IMR-90 (cell line): ENCODE measurements at regions of chr2 and their contacts with region 1.

Region 1: GRCh38 chr2:237726401-237726830 is 72.2 kb upstream of the RBM44 start:
- DNase-seq: peak; percentile 88
- ATAC-seq: peak; percentile 74
- H3K4me3 ChIP-seq: no peak overlapping the region
- H3K27ac ChIP-seq: no peak overlapping the region
- H3K4me1 ChIP-seq: peaks cover 14% of the 10 kb centered on the region
- H3K27me3 ChIP-seq: no peaks in the 10 kb centered on the region
- CTCF ChIP-seq: no peak
- POLR2A ChIP-seq: no peak
- RAD21 ChIP-seq: no peak

Region 2: GRCh38 chr2:237691908-237692600 is 34.4 kb before region 1 on chr2:
- CTCF ChIA-PET with region 1: no interaction called
- POLR2A ChIA-PET with region 1: interaction called, 4 read pairs
- dilution Hi-C with region 1: no loop called
- in situ Hi-C with region 1: no loop called
- intact Hi-C with region 1: loop called (anchors 5 kb)
- DNase-seq: peak; percentile 80
- ATAC-seq: peak; percentile 76
- H3K4me3 ChIP-seq: peak overlapping the region; percentile 57
- H3K27ac ChIP-seq: peak overlapping the region; percentile 81
- H3K4me1 ChIP-seq: peaks cover 30% of the 10 kb centered on the region
- H3K27me3 ChIP-seq: no peaks in the 10 kb centered on the region
- CTCF ChIP-seq: no peak
- POLR2A ChIP-seq: peak; percentile 89
- RAD21 ChIP-seq: no peak

Region 3: GRCh38 chr2:237858294-237859081 is 132.1 kb after region 1 on chr2:
- CTCF ChIA-PET with region 1: no interaction called
- POLR2A ChIA-PET with region 1: no interaction called
- dilution Hi-C with region 1: no loop called
- in situ Hi-C with region 1: no loop called
- intact Hi-C with region 1: no loop called
- DNase-seq: peak; percentile 91
- ATAC-seq: peak; percentile 93
- H3K4me3 ChIP-seq: no peak overlapping the region
- H3K27ac ChIP-seq: no peak overlapping the region
- H3K4me1 ChIP-seq: peaks cover 4% of the 10 kb centered on the region; the same call in 1 of the 2 replicates
- H3K27me3 ChIP-seq: no peaks in the 10 kb centered on the region; the same call in 1 of the 2 replicates
- CTCF ChIP-seq: peak; percentile 97
- POLR2A ChIP-seq: peak; percentile 62
- RAD21 ChIP-seq: peak; percentile 99